OCI-LY7 (cell line): ENCODE measurements at regions of chr9 and their contacts with region 1.

Region 1: DNA sequence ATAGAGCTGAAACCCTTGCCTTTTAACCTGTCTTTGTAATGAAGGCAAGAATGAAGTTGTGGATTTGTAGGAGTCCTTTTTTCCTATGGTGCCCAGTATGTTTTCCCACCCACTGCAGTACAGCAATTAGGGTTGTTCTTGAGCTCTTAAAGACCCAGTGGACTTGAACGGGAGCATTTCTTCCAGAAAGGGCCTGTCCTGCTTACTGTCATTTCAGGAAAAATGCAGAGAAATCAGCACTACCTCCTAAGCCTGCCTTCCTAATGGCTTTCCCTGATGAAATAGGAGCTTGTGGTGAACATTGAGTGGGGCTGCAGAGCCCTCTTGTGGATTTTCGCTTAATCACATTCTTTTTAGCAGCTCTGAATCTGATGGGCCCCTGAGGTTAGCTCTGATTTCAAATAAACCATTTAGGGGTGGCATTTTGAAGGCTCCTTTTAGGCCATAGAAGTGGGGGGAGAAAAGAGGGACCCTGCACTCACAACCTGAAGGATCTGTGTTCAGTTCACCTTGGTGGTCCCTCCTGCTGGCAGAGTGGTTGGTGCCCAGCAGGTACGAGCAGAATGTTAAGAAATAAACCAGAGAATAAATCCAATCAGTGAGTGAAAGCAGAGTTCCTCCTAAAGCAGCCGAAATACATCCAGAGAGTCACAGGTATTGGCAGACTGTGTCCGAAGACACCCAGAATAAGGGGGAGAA is 188.0 kb upstream of the KLF9 start:
- DNase-seq: peak; percentile 70
- H3K4me3 ChIP-seq: peak overlapping the region; percentile 5
- H3K27ac ChIP-seq: peak overlapping the region; percentile 75
- H3K4me1 ChIP-seq: peaks cover 33% of the 10 kb centered on the region
- CTCF ChIP-seq: peak; percentile 91

Region 2: GRCh38 chr9:69971643-69972449 is 630.6 kb before region 1 on chr9:
- CTCF ChIA-PET with region 1: interaction called, 3 read pairs
- POLR2A ChIA-PET with region 1: no interaction called
- intact Hi-C with region 1: loop called (anchors 1 kb)
- DNase-seq: peak; percentile 51
- H3K4me3 ChIP-seq: no peak overlapping the region
- H3K27ac ChIP-seq: no peak overlapping the region
- H3K4me1 ChIP-seq: no peaks in the 10 kb centered on the region
- CTCF ChIP-seq: peak; percentile 87

Region 3: GRCh38 chr9:70111042-70111602 is 491.3 kb before region 1 on chr9:
- CTCF ChIA-PET with region 1: interaction called, 5 read pairs
- POLR2A ChIA-PET with region 1: no interaction called
- intact Hi-C with region 1: loop called (anchors 5 kb)
- DNase-seq: peak; percentile 65
- H3K4me3 ChIP-seq: no peak overlapping the region
- H3K27ac ChIP-seq: no peak overlapping the region
- H3K4me1 ChIP-seq: no peaks in the 10 kb centered on the region
- CTCF ChIP-seq: peak; percentile 94

Region 4: DNA sequence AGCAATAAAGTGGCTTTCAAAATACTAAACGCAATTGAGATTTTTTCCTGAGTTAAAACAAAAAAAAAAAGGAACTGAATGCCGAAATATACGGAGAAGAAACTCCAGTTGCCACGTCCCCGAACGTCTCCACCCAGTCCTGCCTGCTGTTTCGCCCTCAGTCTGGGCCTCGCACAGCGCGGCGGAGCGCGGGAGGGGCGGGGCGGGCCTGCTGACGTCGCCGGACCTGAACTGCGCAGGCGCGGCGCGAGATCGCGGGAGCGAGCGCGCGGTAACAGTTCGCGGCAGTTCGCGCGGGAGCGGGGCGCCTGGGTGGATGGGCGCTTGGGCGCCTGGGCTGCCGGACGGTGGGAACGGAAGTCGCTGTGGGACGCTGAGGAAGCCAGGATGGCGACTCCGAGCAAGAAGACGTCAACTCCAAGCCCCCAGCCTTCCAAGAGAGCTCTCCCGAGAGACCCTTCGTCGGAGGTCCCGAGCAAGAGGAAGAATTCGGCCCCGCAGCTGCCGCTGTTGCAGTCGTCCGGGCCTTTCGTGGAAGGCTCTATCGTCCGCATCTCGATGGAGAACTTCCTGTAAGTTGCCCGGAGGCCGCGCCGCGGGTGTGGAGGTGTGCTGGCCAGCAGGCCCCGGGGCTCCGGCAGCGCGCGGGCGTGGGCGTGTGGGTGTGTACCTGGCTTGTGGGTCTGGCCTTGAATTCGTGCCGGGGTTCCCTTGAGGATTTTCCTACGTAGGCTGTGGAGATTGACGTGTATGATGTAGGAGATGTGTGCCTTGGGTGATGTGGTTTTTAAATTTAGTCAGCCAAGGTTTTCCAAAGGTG is 343.6 kb before region 1 on chr9 and contains the start of gene SMC5:
- CTCF ChIA-PET with region 1: no interaction called
- POLR2A ChIA-PET with region 1: no interaction called
- intact Hi-C with region 1: loop called (anchors 10 kb)
- DNase-seq: peak; percentile 90
- H3K4me3 ChIP-seq: peak within 1 kb of the TSS; percentile 89
- H3K27ac ChIP-seq: peak within 1 kb of the TSS; percentile 54
- H3K4me1 ChIP-seq: peaks cover 34% of the 10 kb centered on the region
- CTCF ChIP-seq: no peak
- total RNA-seq, gene SMC5: 34.9 and 42.0 TPM in 2 replicates

Region 5: DNA sequence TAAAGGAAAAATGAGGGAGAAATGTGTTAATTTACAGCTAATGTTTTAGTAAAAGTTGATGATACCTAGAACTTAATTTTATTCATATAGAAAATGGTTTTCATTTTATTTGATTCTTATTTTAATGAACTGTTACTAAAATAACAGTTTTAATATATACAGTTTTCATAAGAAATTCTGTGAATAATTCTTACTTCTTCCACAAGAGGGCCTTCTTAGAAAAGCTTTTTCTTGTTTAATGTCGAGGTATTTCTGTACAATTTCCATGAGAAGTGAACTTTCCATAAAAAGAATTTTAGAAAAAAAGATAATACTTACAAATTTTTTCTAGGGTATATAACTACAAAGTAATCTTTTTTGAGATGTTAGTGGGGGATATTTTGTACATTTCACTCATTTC is 261.9 kb before region 1 on chr9:
- CTCF ChIA-PET with region 1: no interaction called
- POLR2A ChIA-PET with region 1: interaction called, 3 read pairs
- intact Hi-C with region 1: loop called (anchors 2 kb)
- DNase-seq: peak; percentile 35
- H3K4me3 ChIP-seq: no peak overlapping the region
- H3K27ac ChIP-seq: no peak overlapping the region
- H3K4me1 ChIP-seq: no peaks in the 10 kb centered on the region
- CTCF ChIP-seq: peak; percentile 83

Region 6: GRCh38 chr9:70418822-70419545 is 183.5 kb before region 1 on chr9:
- CTCF ChIA-PET with region 1: interaction called, 3 read pairs
- POLR2A ChIA-PET with region 1: no interaction called
- intact Hi-C with region 1: loop called (anchors 5 kb)
- DNase-seq: peak; percentile 83
- H3K4me3 ChIP-seq: peak overlapping the region; percentile 75
- H3K27ac ChIP-seq: peak overlapping the region; percentile 37
- H3K4me1 ChIP-seq: peaks cover 43% of the 10 kb centered on the region
- CTCF ChIP-seq: no peak